OCI-LY7 (cell line): ENCODE measurements at regions of chr12 and their contacts with region 1.

Region 1: DNA sequence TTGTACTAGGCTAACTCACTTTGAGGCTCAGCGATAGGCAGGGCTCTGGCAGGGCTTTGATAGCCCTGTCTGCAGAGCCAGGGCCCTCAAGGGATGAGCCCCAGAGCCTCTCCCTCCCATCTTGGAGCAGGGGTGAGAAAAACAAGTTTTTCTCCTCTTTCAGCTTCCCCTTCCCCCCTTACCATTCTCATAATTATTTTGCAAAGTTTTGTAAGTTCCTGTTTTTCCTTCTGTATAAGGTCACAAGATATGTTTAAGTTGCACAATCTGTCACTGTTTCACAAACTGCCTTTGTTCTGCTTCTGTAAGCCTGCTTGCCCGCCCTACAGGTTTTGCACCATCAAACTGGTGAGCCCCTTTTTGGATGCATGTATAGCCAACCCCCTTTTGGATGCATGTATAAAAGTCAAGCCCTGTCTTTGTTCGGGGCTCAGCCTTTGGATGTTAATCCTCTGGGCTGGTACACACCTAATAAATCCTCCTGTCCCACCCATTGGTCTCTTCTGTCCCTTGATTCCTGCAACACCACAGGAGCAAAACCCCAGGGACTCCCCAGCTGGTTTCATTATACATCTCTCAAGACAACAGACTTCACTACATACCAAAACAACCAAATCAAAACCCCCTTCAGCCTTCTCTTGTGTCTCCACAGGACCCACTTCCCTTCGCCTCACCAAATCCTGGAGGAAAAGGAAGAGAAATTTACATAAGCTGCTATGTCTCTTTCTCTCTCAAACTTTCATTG is 52.5 kb upstream of the RESF1 start:
- DNase-seq: peak; percentile 58
- H3K4me3 ChIP-seq: no peak overlapping the region
- H3K27ac ChIP-seq: no peak overlapping the region
- H3K4me1 ChIP-seq: no peaks in the 10 kb centered on the region
- CTCF ChIP-seq: no peak

Region 2: DNA sequence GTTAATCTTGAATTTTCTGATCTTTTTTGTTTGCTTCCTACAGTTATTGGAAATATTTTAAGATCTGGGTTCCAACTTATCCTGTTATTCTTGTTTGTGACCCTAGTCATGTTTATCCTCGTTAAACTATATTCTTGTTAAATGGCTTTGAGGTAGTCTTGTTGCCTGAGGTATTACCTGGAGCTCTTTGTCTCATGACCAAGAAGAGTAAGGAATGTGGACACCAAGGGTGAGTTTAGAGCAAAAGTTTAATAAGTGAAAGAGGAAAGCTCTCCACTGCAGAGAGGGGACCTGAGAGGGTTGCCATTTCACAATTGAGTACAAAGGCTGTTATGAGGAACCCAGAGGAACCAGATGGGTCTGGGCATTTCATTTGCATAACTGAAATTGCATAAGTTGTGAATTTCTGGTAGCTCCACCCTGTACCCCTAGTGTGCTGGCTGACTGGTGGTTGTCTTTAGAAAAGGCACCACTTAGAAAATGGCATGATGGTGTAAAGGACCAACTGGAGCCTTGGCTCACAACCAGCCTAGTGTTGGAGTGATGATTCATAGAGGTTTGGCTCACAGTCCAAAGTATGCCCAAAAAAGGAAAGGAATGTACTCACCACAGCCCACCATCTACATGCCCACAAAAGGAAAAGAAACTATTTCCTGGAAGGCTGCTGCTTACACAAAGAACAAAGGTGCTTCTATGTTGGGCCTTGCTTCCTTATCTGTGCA is 15.8 kb after region 1 on chr12:
- CTCF ChIA-PET with region 1: no interaction called
- POLR2A ChIA-PET with region 1: interaction called, 14 read pairs
- intact Hi-C with region 1: no loop called
- DNase-seq: peak; percentile 57
- H3K4me3 ChIP-seq: no peak overlapping the region
- H3K27ac ChIP-seq: no peak overlapping the region
- H3K4me1 ChIP-seq: no peaks in the 10 kb centered on the region
- CTCF ChIP-seq: no peak

Region 3: GRCh38 chr12:32032205-32032810 is 125.6 kb after region 1 on chr12:
- CTCF ChIA-PET with region 1: no interaction called
- POLR2A ChIA-PET with region 1: no interaction called
- intact Hi-C with region 1: no loop called
- DNase-seq: no peak
- H3K4me3 ChIP-seq: no peak overlapping the region
- H3K27ac ChIP-seq: no peak overlapping the region
- H3K4me1 ChIP-seq: peaks cover 17% of the 10 kb centered on the region
- CTCF ChIP-seq: no peak